Activated T-helper 2 cell treated with anti-CD3 and anti-CD28 coated beads, Interferon-gamma antibody, Interleukin-2, Interleukin-4, amounts not matched to agents 10 μg/mL and 5 μg/mL and 100 μg/mL, durations not matched to agents 14 hours and 24 hours and 36 hours (primary cell): ENCODE measurements at regions of chr3 and their contacts with region 1.

Region 1: DNA sequence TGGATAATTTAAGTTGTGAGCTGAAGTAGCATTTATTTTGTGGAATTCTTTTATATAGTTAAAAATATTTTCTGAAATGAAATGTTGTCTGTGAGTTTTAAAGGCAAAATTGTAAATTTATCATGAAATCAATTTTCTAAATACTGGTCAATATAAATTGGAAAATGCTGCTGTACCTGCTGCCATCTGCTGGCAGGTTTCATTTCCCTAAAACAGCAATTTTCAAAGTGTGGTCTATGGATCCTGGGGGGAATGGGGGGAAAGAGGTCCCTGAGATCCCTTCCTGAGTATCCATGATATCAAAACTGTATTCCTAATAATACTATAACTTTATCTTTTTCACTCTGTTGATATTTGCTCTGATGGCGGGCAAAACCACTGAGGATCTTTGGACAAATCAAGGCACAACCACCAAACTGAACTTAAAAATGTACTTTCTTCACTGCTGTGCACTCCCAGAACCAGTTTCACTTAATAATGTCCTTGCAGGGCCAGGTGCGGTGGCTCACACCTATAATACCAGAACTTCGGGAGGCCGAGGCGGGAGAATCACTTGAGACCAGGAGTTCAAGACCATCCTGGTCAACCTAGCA is 17.2 kb upstream of the CCR4 start:
- DNase-seq: no peak
- H3K4me3 Mint-ChIP-seq: no peak overlapping the region
- H3K27ac Mint-ChIP-seq: no peak overlapping the region
- H3K4me1 Mint-ChIP-seq: no peaks in the 10 kb centered on the region
- H3K27me3 Mint-ChIP-seq: peaks cover 13% of the 10 kb centered on the region

Region 2: GRCh38 chr3:32733631-32734229 is 200.5 kb before region 1 on chr3:
- intact Hi-C with region 1: loop called (anchors 2 kb)
- DNase-seq: no peak
- H3K4me3 Mint-ChIP-seq: no peak overlapping the region
- H3K27ac Mint-ChIP-seq: no peak overlapping the region
- H3K4me1 Mint-ChIP-seq: peaks cover 2% of the 10 kb centered on the region
- H3K27me3 Mint-ChIP-seq: no peaks in the 10 kb centered on the region

Region 3: GRCh38 chr3:32848215-32848614 is 86.0 kb before region 1 on chr3:
- intact Hi-C with region 1: no loop called
- DNase-seq: no peak
- H3K4me3 Mint-ChIP-seq: no peak overlapping the region
- H3K27ac Mint-ChIP-seq: no peak overlapping the region
- H3K4me1 Mint-ChIP-seq: no peaks in the 10 kb centered on the region
- H3K27me3 Mint-ChIP-seq: peaks cover 11% of the 10 kb centered on the region

Region 4: DNA sequence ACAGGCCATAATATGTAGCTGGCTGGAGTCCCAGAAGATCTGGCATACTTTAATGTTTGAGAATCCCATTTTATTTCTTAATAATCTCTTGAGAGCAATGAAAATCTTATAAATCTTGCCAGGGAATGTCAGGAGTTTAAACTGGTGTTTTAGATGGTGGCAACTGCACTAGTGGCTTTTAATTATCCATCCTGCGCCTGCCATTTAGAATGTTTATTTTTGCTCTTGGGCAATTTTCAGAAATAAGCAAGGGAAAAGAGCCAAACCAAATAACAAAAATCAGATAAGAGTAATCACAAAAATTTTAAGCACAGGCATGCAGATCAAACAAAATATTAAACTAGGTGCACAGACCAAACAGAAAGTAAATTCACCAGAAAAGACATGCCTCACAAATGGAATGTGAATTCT is 547.9 kb after region 1 on chr3:
- intact Hi-C with region 1: no loop called
- DNase-seq: no peak
- H3K4me3 Mint-ChIP-seq: no peak overlapping the region
- H3K27ac Mint-ChIP-seq: no peak overlapping the region
- H3K4me1 Mint-ChIP-seq: no peaks in the 10 kb centered on the region
- H3K27me3 Mint-ChIP-seq: no peaks in the 10 kb centered on the region